Adrenal gland (tissue), 19 donors: ENCODE measurements at regions of chr14 and their contacts with region 1.

Region 1: DNA sequence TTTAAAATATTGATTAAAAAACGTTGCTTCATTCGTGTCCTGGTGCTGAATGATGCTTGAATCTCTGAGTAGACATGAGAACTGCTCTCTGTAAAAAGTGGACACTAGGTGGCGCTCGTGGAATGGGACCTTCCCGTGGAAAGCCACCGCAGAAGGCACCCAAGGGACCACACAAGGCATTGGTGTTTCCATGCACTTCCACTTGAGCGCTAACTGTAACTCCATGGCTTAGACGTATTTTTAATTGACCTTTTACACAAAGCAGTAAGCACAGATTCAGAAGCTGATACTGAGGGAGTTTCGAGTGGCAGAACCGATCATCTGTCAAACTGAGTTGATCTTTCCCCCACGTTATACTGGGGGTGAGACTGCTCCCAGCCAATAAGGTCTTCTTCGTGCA is 135.3 kb downstream of the PRKCH start:
- DNase-seq: peak; percentile 79 to 96 (median 90)
- H3K4me3 ChIP-seq: no peak overlapping the region
- H3K27ac ChIP-seq: no peak overlapping the region
- H3K4me1 ChIP-seq: no peaks in the 10 kb centered on the region
- H3K27me3 ChIP-seq: no peaks in the 10 kb centered on the region
- CTCF ChIP-seq: peak; percentile 80 to 93 (median 86)
- POLR2A ChIP-seq: no peak

Region 2: GRCh38 chr14:61296719-61297502 is 159.8 kb before region 1 on chr14:
- intact Hi-C with region 1: loop called (anchors 10 kb)
- DNase-seq: peak in 1 of 7 donors; percentile 11
- H3K4me3 ChIP-seq: no peak overlapping the region
- H3K27ac ChIP-seq: peak overlapping the region in 1 of 5 donors; percentile 52
- H3K4me1 ChIP-seq: peaks cover 7 to 14% of the 10 kb centered on the region in 2 donors
- H3K27me3 ChIP-seq: no peaks in the 10 kb centered on the region
- CTCF ChIP-seq: peak; percentile 40 to 66 (median 52)
- POLR2A ChIP-seq: no peak

Region 3: DNA sequence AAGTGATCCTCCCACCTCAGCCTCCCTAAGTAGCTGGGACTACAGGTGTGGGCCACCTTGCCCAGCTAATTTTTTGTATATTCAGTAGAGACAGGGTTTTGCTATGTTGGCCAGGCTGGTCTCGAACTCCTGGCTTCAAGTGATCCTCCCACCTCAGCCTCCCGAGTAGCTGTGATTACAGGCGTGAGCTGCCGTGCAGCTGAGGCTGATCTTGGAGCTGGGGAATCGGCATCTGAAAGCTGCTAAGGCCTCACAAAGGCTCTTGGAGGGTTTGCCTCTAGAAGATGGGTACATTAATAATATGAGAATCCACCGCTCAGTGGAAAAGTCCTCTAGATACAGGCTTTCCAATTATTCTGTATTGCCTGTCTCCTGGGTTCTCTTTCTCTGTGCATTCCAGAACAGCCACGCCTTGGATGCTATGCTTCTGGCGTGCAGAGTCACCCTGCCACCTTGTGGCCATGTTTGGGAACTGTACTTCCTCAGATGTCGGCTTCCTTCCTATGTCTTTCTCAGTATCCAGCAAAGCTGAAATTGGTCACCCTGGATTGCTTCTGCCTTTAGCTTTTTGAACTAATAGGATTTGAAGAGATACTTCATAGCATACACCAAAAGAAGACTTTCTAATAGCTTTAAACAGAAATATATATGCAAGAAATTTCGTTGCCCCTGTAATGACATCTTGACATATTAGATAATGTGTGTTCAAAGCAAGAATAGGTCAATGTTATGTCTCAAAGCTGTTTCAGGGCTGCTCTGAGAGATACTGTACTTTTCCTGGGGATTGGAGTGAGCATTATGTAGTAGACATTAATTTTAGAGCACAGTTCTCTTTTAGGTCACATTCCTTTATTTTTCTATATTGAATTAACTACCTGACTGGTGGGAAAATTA is 380.9 kb after region 1 on chr14:
- intact Hi-C with region 1: loop called (anchors 2 to 5 kb)
- DNase-seq: peak; percentile 66 to 93 (median 83)
- H3K4me3 ChIP-seq: no peak overlapping the region
- H3K27ac ChIP-seq: no peak overlapping the region
- H3K4me1 ChIP-seq: no peaks in the 10 kb centered on the region
- H3K27me3 ChIP-seq: no peaks in the 10 kb centered on the region
- CTCF ChIP-seq: peak; percentile 93 to 99 (median 96)
- POLR2A ChIP-seq: no peak

Region 4: GRCh38 chr14:62126879-62127478 is 670.3 kb after region 1 on chr14:
- intact Hi-C with region 1: loop called in 1 of 2 experiments (anchors 5 kb)
- DNase-seq: peak in 2 of 7 donors; percentile 6 to 17
- H3K4me3 ChIP-seq: no peak overlapping the region
- H3K27ac ChIP-seq: no peak overlapping the region
- H3K4me1 ChIP-seq: no peaks in the 10 kb centered on the region
- H3K27me3 ChIP-seq: peaks cover 6% of the 10 kb centered on the region
- CTCF ChIP-seq: peak; percentile 55 to 78 (median 66)
- POLR2A ChIP-seq: no peak